ENCODE measurements at regions of chr1 and their contacts with region 1.

Region 1: GRCh38 chr1:39691262-39692151 is at the start of gene HPCAL4:
- DNase-seq: peak; percentile 97
- H3K4me3 Mint-ChIP-seq: peak within 1 kb of the TSS; percentile 87
- H3K27ac Mint-ChIP-seq: peak within 1 kb of the TSS; percentile 78
- H3K4me1 Mint-ChIP-seq: peaks cover 27% of the 10 kb centered on the region
- H3K27me3 Mint-ChIP-seq: peaks cover 49% of the 10 kb centered on the region
- total RNA-seq, gene HPCAL4: 0.38 and 0.44 TPM in 2 replicates

Region 2: GRCh38 chr1:39653546-39654031 is 37.9 kb before region 1 on chr1:
- intact Hi-C with region 1: loop called (anchors 5 kb)
- DNase-seq: peak; percentile 91
- H3K4me3 Mint-ChIP-seq: no peak overlapping the region
- H3K27ac Mint-ChIP-seq: no peak overlapping the region
- H3K4me1 Mint-ChIP-seq: peaks cover 15% of the 10 kb centered on the region
- H3K27me3 Mint-ChIP-seq: peaks cover 6% of the 10 kb centered on the region

Region 3: GRCh38 chr1:39666772-39667171 is 24.7 kb before region 1 on chr1:
- intact Hi-C with region 1: loop called (anchors 1 kb)
- DNase-seq: peak; percentile 78
- H3K4me3 Mint-ChIP-seq: peak overlapping the region; percentile 20
- H3K27ac Mint-ChIP-seq: peak overlapping the region; percentile 47
- H3K4me1 Mint-ChIP-seq: peaks cover 26% of the 10 kb centered on the region
- H3K27me3 Mint-ChIP-seq: peaks cover 12% of the 10 kb centered on the region

Region 4: GRCh38 chr1:39727221-39727931 is 35.9 kb after region 1 on chr1:
- intact Hi-C with region 1: loop called (anchors 5 kb)
- DNase-seq: peak; percentile 51
- H3K4me3 Mint-ChIP-seq: peak overlapping the region; percentile 19
- H3K27ac Mint-ChIP-seq: peak overlapping the region; percentile 32
- H3K4me1 Mint-ChIP-seq: peaks cover 25% of the 10 kb centered on the region
- H3K27me3 Mint-ChIP-seq: peaks cover 54% of the 10 kb centered on the region

Region 5: GRCh38 chr1:39799770-39800470 is 108.4 kb after region 1 on chr1:
- intact Hi-C with region 1: loop called (anchors 5 kb)
- DNase-seq: peak; percentile 89
- H3K4me3 Mint-ChIP-seq: peak overlapping the region; percentile 67
- H3K27ac Mint-ChIP-seq: peak overlapping the region; percentile 76
- H3K4me1 Mint-ChIP-seq: peaks cover 11% of the 10 kb centered on the region
- H3K27me3 Mint-ChIP-seq: peaks cover 10% of the 10 kb centered on the region